ENCODE measurements at regions of chr19 and their contacts with region 1.

Region 1: DNA sequence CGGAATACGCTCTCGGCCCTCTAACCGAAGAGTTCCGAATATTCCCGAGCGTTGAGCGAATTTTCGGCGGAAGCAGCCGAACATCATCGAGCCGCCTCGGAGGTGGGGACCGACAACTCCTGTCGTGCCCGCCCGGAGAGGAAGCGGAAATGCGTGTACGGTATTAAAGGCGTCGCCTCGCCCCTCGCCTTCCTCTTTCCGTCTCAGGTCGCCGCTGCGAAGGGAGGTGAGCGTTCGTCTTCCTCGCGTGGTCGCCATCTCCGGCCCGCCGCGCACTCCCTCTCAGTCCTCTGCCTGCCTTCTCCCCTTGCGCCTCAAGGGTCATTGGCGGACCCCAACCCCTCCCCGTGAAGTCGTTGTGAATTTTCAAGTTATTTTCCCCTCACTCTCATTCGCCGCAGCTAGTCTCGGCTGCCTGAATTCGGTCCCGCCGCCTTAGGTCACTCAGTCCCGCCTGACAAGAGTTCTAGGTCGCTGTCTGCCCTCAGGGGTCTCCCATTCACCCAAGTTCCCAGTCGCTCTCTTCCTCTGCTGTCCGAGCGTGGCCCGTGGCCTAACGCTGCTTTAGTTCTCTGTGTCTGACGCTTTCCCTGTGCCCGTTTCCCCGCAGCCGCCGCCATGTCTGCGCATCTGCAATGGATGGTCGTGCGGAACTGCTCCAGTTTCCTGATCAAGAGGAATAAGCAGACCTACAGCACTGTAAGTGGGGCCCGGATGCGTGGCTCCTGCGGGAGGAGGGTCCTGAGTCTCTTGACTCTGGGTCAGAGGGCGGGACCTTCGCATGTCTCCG is at the start of gene RPL28:
- DNase-seq: peak; percentile 98
- ATAC-seq: peak; percentile 85
- H3K4me3 Mint-ChIP-seq: peak within 1 kb of the TSS; percentile 89
- H3K27ac Mint-ChIP-seq: peak within 1 kb of the TSS; percentile 98
- H3K4me1 Mint-ChIP-seq: peaks cover 51% of the 10 kb centered on the region
- H3K27me3 Mint-ChIP-seq: no peaks in the 10 kb centered on the region
- total RNA-seq, gene RPL28: 2,751 to 4,078 TPM

Region 2: GRCh38 chr19:55279770-55280643 is 105.9 kb before region 1 on chr19 and contains the start of gene HSPBP1:
- CTCF ChIA-PET with region 1: interaction called, 4 read pairs
- POLR2A ChIA-PET with region 1: no interaction called
- intact Hi-C with region 1: loop called in 1 of 2 experiments (anchors 1 kb)
- DNase-seq: peak; percentile 98
- ATAC-seq: peak; percentile 92
- H3K4me3 Mint-ChIP-seq: peak within 1 kb of the TSS; percentile 100
- H3K27ac Mint-ChIP-seq: peak within 1 kb of the TSS; percentile 98
- H3K4me1 Mint-ChIP-seq: peaks cover 24% of the 10 kb centered on the region
- H3K27me3 Mint-ChIP-seq: no peaks in the 10 kb centered on the region
- total RNA-seq, gene HSPBP1: 41.1 to 45.2 TPM

Region 3: GRCh38 chr19:55407800-55408532 is 22.0 kb after region 1 on chr19:
- CTCF ChIA-PET with region 1: interaction called, 3 read pairs
- POLR2A ChIA-PET with region 1: interaction called, 41 read pairs
- intact Hi-C with region 1: loop called (anchors 1 kb)
- DNase-seq: peak; percentile 98
- ATAC-seq: peak; percentile 96
- H3K4me3 Mint-ChIP-seq: peak overlapping the region; percentile 90
- H3K27ac Mint-ChIP-seq: peak overlapping the region; percentile 96
- H3K4me1 Mint-ChIP-seq: peaks cover 22% of the 10 kb centered on the region
- H3K27me3 Mint-ChIP-seq: no peaks in the 10 kb centered on the region

Region 4: GRCh38 chr19:55503502-55504251 is 117.7 kb after region 1 on chr19:
- CTCF ChIA-PET with region 1: interaction called, 4 read pairs
- POLR2A ChIA-PET with region 1: no interaction called
- intact Hi-C with region 1: loop called in 1 of 2 experiments (anchors 1 kb)
- DNase-seq: peak; percentile 96
- ATAC-seq: peak; percentile 97
- H3K4me3 Mint-ChIP-seq: peak overlapping the region; percentile 65
- H3K27ac Mint-ChIP-seq: peak overlapping the region; percentile 67
- H3K4me1 Mint-ChIP-seq: peaks cover 19% of the 10 kb centered on the region
- H3K27me3 Mint-ChIP-seq: no peaks in the 10 kb centered on the region

Region 5: DNA sequence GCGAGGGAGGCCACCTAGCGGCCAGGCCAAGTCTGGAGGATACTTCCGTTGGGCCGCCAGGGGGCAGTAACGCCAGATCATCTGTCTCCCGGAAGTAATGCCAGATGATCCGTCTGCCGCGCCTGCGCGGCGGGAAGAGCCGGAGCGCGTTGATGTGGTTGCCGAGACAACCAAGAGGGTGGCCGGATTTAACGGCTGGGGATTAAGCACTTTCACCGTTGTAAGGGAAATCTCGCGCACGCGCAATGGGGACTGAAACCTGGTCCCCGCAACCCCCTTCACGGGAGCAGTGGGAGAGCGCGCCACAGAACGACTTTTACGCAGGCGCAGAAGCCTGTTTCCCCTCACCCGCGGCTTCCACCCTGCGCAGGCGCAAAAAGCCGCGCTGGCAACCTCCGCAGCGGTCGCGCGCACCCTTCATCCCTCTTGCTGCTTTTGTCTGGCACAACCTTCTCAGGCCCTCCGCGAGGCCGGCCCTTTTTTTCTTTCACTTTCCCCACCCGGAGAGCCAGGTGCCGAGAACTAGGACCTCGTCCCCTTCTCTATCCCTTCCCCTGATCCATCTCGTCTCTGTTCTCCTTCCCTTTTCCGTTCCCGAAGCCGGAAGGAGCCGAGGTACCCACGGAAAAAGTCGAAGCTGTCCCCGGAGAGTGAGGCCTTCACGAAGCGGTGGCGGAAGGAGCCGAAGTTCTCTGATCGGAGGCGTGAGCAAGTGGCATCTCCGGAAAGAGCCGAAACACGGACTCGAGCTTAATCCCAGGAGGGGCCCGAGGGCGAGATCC is 268.0 kb after region 1 on chr19:
- CTCF ChIA-PET with region 1: interaction called, 6 read pairs
- POLR2A ChIA-PET with region 1: interaction called, 3 read pairs
- intact Hi-C with region 1: loop called in 1 of 2 experiments (anchors 1 kb)
- DNase-seq: peak; percentile 99
- ATAC-seq: peak; percentile 84
- H3K4me3 Mint-ChIP-seq: peak overlapping the region; percentile 86
- H3K27ac Mint-ChIP-seq: peak overlapping the region; percentile 98
- H3K4me1 Mint-ChIP-seq: peaks cover 37% of the 10 kb centered on the region
- H3K27me3 Mint-ChIP-seq: no peaks in the 10 kb centered on the region

Region 6: GRCh38 chr19:56121180-56122167 is 735.5 kb after region 1 on chr19 and contains the start of gene ZNF787:
- CTCF ChIA-PET with region 1: no interaction called
- POLR2A ChIA-PET with region 1: no interaction called
- intact Hi-C with region 1: loop called in 1 of 2 experiments (anchors 10 kb)
- DNase-seq: peak; percentile 98
- ATAC-seq: peak; percentile 92
- H3K4me3 Mint-ChIP-seq: peak within 1 kb of the TSS; percentile 82
- H3K27ac Mint-ChIP-seq: peak within 1 kb of the TSS; percentile 91
- H3K4me1 Mint-ChIP-seq: peaks cover 48% of the 10 kb centered on the region
- H3K27me3 Mint-ChIP-seq: no peaks in the 10 kb centered on the region
- total RNA-seq, gene ZNF787: 27.6 to 28.4 TPM

Measured in activated CD4-positive, alpha-beta T cell treated with anti-CD3 and anti-CD28 coated beads for 36 hours (primary cell).